ENCODE measurements at regions of chr4 and their contacts with region 1.

Region 1: GRCh38 chr4:2186133-2186864 is 55.6 kb downstream of the HAUS3 start:
- DNase-seq: peak; percentile 51 to 57
- H3K4me3 ChIP-seq: no peak overlapping the region
- H3K27ac ChIP-seq: no peak overlapping the region
- H3K4me1 ChIP-seq: no peaks in the 10 kb centered on the region
- H3K27me3 ChIP-seq: no peaks in the 10 kb centered on the region
- CTCF ChIP-seq: peak in 5 of 6 experiments; percentile 30 to 77 (median 65)
- POLR2A ChIP-seq: no peak

Region 2: GRCh38 chr4:1910643-1911042 is 275.7 kb before region 1 on chr4:
- intact Hi-C with region 1: loop called (anchors 10 kb)
- DNase-seq: peak; percentile 56
- H3K4me3 ChIP-seq: no peak overlapping the region
- H3K27ac ChIP-seq: no peak overlapping the region
- H3K4me1 ChIP-seq: no peaks in the 10 kb centered on the region
- H3K27me3 ChIP-seq: no peaks in the 10 kb centered on the region
- CTCF ChIP-seq: peak in 4 of 6 experiments; percentile 32 to 72 (median 56)
- POLR2A ChIP-seq: no peak

Region 3: DNA sequence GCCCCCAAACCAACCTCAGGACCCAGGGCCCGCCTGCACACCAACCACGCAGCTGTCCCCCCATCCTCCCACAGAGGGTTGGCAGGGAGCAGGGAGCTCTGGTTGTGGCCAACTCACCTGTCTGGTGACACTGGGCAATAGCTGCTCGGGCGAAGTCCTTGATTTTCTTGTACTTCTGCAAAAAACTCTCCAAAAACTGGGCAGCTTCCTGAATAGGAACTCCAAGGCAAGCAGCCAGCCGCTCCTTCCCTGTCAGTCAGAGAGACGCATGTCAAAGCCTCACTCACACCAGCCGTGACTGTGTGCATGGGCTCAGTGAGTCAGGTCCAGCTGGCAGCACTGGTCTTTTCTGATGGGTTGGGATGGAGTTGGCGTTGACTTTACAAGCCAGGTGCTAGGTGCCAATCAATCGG is 100.8 kb before region 1 on chr4:
- intact Hi-C with region 1: no loop called
- DNase-seq: no peak
- H3K4me3 ChIP-seq: no peak overlapping the region
- H3K27ac ChIP-seq: no peak overlapping the region
- H3K4me1 ChIP-seq: no peaks in the 10 kb centered on the region
- H3K27me3 ChIP-seq: no peaks in the 10 kb centered on the region
- CTCF ChIP-seq: no peak
- POLR2A ChIP-seq: no peak

Region 4: DNA sequence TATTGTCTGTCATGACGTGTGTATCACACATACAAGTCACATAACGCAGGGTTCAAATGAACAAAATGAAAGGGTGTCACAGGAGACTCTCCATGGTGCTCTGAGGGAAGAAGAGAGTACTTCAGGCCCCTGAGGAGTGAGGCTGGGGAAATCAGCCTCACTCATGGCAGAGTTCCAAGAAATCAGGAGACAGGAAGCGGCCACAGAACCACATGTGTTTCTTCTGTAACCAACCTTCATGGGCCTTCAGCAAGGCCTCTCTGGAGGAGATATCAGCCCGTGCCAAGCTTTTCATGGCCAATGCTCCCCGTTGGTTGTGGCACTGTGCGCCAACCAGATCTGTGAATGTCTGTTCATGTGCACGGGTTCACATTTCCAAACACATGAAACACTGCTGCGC is 51.2 kb before region 1 on chr4:
- intact Hi-C with region 1: no loop called
- DNase-seq: peak in 1 of 2 donors; percentile 30
- H3K4me3 ChIP-seq: no peak overlapping the region
- H3K27ac ChIP-seq: no peak overlapping the region
- H3K4me1 ChIP-seq: no peaks in the 10 kb centered on the region
- H3K27me3 ChIP-seq: no peaks in the 10 kb centered on the region
- CTCF ChIP-seq: no peak
- POLR2A ChIP-seq: no peak

Measured in thyroid gland (tissue), 4 donors.